Activated CD8-positive, alpha-beta T cell treated with anti-CD3 and anti-CD28 coated beads for 36 hours (primary cell): ENCODE measurements at regions of chr19 and their contacts with region 1.

Region 1: GRCh38 chr19:39557441-39558151 is 17.6 kb upstream of the EID2 start:
- DNase-seq: no peak
- ATAC-seq: peak; percentile 66
- H3K4me3 Mint-ChIP-seq: peak overlapping the region; percentile 46
- H3K27ac Mint-ChIP-seq: peak overlapping the region; percentile 85
- H3K4me1 Mint-ChIP-seq: peaks cover 18% of the 10 kb centered on the region
- H3K27me3 Mint-ChIP-seq: no peaks in the 10 kb centered on the region
- CTCF ChIP-seq: no peak

Region 2: DNA sequence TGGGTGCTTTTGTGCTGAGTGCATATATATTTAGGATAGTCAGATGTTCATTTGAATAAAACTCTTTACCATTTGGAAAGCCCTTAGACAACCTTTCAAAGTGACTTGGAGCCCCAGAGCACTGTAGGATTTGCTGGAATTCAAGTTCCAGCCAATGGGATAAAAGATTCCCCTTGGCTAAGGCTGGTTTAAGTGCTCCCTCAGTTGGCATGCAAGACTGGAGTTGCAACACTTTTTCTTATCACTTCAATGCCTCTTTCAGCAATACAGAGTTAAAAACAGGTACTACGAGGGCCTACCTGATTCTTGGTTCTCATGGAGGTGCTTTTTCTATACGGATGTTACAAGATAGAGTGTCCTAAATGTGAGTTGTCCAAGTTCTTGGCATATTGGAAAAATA is 18.9 kb after region 1 on chr19:
- CTCF ChIA-PET with region 1: no interaction called
- POLR2A ChIA-PET with region 1: no interaction called
- intact Hi-C with region 1: no loop called
- DNase-seq: no peak
- ATAC-seq: no peak
- H3K4me3 Mint-ChIP-seq: no peak overlapping the region
- H3K27ac Mint-ChIP-seq: no peak overlapping the region
- H3K4me1 Mint-ChIP-seq: no peaks in the 10 kb centered on the region
- H3K27me3 Mint-ChIP-seq: peaks cover 49% of the 10 kb centered on the region
- CTCF ChIP-seq: no peak

Region 3: GRCh38 chr19:39671738-39672363 is 114.3 kb after region 1 on chr19:
- CTCF ChIA-PET with region 1: interaction called, 31 read pairs
- POLR2A ChIA-PET with region 1: no interaction called
- intact Hi-C with region 1: no loop called
- DNase-seq: peak; percentile 63
- ATAC-seq: peak; percentile 58
- H3K4me3 Mint-ChIP-seq: no peak overlapping the region
- H3K27ac Mint-ChIP-seq: no peak overlapping the region
- H3K4me1 Mint-ChIP-seq: peaks cover 11% of the 10 kb centered on the region
- H3K27me3 Mint-ChIP-seq: peaks cover 15% of the 10 kb centered on the region
- CTCF ChIP-seq: peak; percentile 83

Region 4: GRCh38 chr19:39696418-39696817 is 138.8 kb after region 1 on chr19:
- CTCF ChIA-PET with region 1: no interaction called
- POLR2A ChIA-PET with region 1: no interaction called
- intact Hi-C with region 1: no loop called
- DNase-seq: no peak
- ATAC-seq: no peak
- H3K4me3 Mint-ChIP-seq: no peak overlapping the region
- H3K27ac Mint-ChIP-seq: no peak overlapping the region
- H3K4me1 Mint-ChIP-seq: no peaks in the 10 kb centered on the region
- H3K27me3 Mint-ChIP-seq: peaks cover 43% of the 10 kb centered on the region
- CTCF ChIP-seq: no peak